MCF 10A (cell line): ENCODE measurements at regions of chr1 and their contacts with region 1.

Region 1: GRCh38 chr1:162527324-162527723 is 29.7 kb downstream of the UHMK1 start:
- DNase-seq: no peak
- H3K4me3 Mint-ChIP-seq: no peak overlapping the region
- H3K27ac Mint-ChIP-seq: no peak overlapping the region
- H3K4me1 Mint-ChIP-seq: no peaks in the 10 kb centered on the region
- H3K27me3 Mint-ChIP-seq: no peaks in the 10 kb centered on the region
- CTCF ChIP-seq: no peak

Region 2: GRCh38 chr1:162444903-162445302 is 82.4 kb before region 1 on chr1:
- CTCF ChIA-PET with region 1: no interaction called
- POLR2A ChIA-PET with region 1: no interaction called
- intact Hi-C with region 1: no loop called
- DNase-seq: no peak
- H3K4me3 Mint-ChIP-seq: no peak overlapping the region
- H3K27ac Mint-ChIP-seq: no peak overlapping the region
- H3K4me1 Mint-ChIP-seq: no peaks in the 10 kb centered on the region
- H3K27me3 Mint-ChIP-seq: peaks cover 38% of the 10 kb centered on the region
- CTCF ChIP-seq: no peak

Region 3: GRCh38 chr1:162541619-162542141 is 14.4 kb after region 1 on chr1:
- CTCF ChIA-PET with region 1: interaction called, 8 read pairs
- POLR2A ChIA-PET with region 1: interaction called, 17 read pairs
- intact Hi-C with region 1: no loop called
- DNase-seq: peak; percentile 96
- H3K4me3 Mint-ChIP-seq: peak overlapping the region; percentile 20
- H3K27ac Mint-ChIP-seq: peak overlapping the region; percentile 73
- H3K4me1 Mint-ChIP-seq: peaks cover 41% of the 10 kb centered on the region
- H3K27me3 Mint-ChIP-seq: no peaks in the 10 kb centered on the region
- CTCF ChIP-seq: no peak